ENCODE measurements at regions of chr11 and their contacts with region 1.

Region 1: DNA sequence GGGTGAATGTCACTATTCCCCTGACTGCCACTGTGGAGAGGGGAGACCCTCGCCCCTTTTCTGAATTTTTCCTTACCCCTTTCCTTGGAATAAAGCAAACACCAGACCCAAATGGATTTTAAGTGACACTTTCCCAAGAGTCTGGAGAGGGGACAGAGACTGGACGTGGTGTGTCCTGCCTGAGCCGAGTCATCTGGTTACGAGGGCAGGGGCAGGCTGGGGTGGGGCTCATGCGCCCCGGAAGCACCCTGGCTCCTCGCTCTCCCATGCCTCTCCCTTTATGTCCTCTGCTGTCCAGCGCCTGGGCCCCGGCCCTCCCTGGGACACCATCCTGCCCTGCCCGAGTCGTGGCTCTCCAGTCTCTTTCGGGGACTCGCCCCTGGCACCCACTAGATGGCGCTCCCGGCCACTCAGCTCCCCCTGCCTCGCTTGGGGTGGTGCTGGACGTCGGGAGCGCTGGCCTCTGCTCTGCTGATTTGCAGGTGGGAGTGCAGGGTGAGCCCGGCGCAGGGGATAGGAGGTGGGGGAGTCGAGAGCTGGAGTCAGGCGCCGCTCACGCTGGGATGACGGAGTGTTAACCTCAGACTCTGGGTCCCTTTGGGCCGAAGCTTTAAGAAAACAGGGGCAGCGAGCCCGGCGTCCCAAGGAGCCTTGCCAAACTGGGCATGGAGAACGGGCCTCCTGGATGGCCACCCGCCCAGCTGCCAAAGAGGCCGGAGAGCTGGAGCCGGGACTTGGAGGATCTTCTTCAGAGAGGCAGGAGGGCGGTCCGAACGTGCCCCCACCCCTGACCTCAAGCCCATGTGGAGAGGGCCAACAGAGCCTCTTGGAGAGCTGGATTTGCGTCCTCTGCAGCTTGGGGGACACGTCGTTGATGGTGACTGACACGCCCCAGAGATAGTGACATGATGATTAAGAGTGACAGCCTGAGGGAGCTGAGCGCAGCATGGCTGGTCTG is 89.9 kb downstream of the RPS6KA4 start:
- DNase-seq: peak; percentile 92
- ATAC-seq: peak; percentile 83
- H3K4me3 Mint-ChIP-seq: peak overlapping the region; percentile 76
- H3K27ac Mint-ChIP-seq: no peak overlapping the region
- H3K4me1 Mint-ChIP-seq: peaks cover 18% of the 10 kb centered on the region
- H3K27me3 Mint-ChIP-seq: peaks cover 68% of the 10 kb centered on the region
- CTCF ChIP-seq: peak; percentile 69

Region 2: GRCh38 chr11:64165849-64166635 is 282.8 kb before region 1 on chr11 and contains the start of gene MACROD1:
- CTCF ChIA-PET with region 1: no interaction called
- POLR2A ChIA-PET with region 1: no interaction called
- DNase-seq: peak; percentile 80
- ATAC-seq: peak; percentile 77
- H3K4me3 Mint-ChIP-seq: peak within 1 kb of the TSS; percentile 74
- H3K27ac Mint-ChIP-seq: peak within 1 kb of the TSS; percentile 86
- H3K4me1 Mint-ChIP-seq: peaks cover 22% of the 10 kb centered on the region
- H3K27me3 Mint-ChIP-seq: no peaks in the 10 kb centered on the region
- CTCF ChIP-seq: no peak
- total RNA-seq, gene MACROD1: 36.9 to 54.4 TPM (median 52.9 TPM) in 3 replicates

Region 3: DNA sequence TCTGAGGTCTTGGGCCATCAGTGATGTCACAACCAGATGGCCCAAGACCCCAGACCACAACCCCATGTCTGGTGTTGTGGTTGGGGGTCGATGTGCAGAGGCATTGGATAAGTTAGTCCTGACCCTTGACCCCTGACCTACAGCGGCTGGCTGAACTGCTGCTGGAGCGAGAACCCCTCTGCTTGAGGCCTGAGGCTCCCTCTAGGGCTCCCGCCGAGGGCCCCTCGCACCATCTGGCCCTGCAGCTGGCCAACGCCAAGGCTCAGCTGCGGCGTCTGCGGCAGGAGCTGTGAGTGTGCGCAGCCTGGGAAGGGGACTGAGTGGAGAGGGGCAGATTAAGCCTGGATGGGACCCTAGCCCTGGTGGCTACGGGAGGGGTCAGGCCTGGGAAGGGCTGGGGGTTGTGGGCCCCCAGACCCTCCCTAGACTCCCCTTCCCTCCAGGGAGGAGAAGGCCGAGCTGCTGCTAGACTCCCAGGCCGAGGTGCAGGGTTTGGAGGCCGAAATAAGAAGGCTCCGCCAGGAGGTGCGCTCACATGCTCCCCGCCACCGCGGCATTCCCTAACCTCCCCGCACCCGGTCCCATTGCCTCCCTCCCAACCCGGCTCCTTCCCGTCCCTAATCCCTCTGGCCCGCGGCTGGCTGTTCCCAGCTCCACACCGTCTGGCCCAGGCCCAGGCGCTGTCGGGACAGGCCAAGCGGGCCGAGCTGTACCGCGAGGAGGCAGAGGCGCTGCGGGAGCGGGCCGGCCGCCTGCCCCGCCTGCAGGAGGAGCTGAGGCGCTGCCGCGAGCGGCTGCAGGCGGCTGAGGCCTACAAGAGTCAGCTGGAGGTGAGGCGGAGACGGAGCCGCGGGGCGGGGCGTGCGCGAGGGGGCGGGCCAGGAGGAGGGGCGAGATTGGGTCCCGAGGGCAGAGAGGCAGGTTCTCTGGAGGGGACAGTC is 106.8 kb before region 1 on chr11:
- CTCF ChIA-PET with region 1: interaction called, 35 read pairs
- POLR2A ChIA-PET with region 1: no interaction called
- DNase-seq: peak; percentile 97
- ATAC-seq: peak; percentile 75
- H3K4me3 Mint-ChIP-seq: peak overlapping the region; percentile 69
- H3K27ac Mint-ChIP-seq: no peak overlapping the region
- H3K4me1 Mint-ChIP-seq: peaks cover 21% of the 10 kb centered on the region
- H3K27me3 Mint-ChIP-seq: peaks cover 30% of the 10 kb centered on the region
- CTCF ChIP-seq: no peak

Region 4: GRCh38 chr11:64396079-64396591 is 52.7 kb before region 1 on chr11:
- CTCF ChIA-PET with region 1: interaction called, 36 read pairs
- POLR2A ChIA-PET with region 1: no interaction called
- DNase-seq: peak; percentile 48
- ATAC-seq: peak; percentile 90
- H3K4me3 Mint-ChIP-seq: peak overlapping the region; percentile 38
- H3K27ac Mint-ChIP-seq: peak overlapping the region; percentile 96
- H3K4me1 Mint-ChIP-seq: peaks cover 27% of the 10 kb centered on the region
- H3K27me3 Mint-ChIP-seq: peaks cover 23% of the 10 kb centered on the region
- CTCF ChIP-seq: no peak

Region 5: DNA sequence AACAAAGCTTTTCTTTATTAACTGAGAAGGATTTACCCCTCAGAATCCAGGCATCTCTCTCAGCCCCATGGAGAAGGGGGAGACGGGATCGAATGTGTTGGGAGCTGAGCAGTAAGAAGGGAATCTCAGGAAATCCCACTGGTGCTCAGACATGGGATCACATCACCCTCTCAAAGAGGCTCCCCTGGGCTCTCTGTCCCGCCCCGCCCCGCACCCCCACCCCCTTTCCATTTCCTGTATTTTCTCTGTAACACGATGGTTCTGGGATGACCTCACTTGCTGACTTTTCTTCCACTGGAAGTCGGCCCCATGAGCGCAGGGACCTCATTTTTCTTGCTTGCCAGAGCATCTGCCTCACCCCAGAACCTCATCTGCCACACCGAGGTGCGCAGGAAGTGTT is 10.1 kb after region 1 on chr11:
- CTCF ChIA-PET with region 1: interaction called, 41 read pairs
- POLR2A ChIA-PET with region 1: interaction called, 4 read pairs
- DNase-seq: no peak
- ATAC-seq: peak; percentile 43; the same call in 1 of the 2 replicates
- H3K4me3 Mint-ChIP-seq: no peak overlapping the region
- H3K27ac Mint-ChIP-seq: no peak overlapping the region
- H3K4me1 Mint-ChIP-seq: peaks cover 16% of the 10 kb centered on the region
- H3K27me3 Mint-ChIP-seq: peaks cover 51% of the 10 kb centered on the region
- CTCF ChIP-seq: no peak

Region 6: GRCh38 chr11:64524526-64525042 is 75.7 kb after region 1 on chr11:
- CTCF ChIA-PET with region 1: interaction called, 15 read pairs
- POLR2A ChIA-PET with region 1: no interaction called
- DNase-seq: no peak
- ATAC-seq: no peak
- H3K4me3 Mint-ChIP-seq: no peak overlapping the region
- H3K27ac Mint-ChIP-seq: no peak overlapping the region
- H3K4me1 Mint-ChIP-seq: no peaks in the 10 kb centered on the region
- H3K27me3 Mint-ChIP-seq: peaks cover 74% of the 10 kb centered on the region
- CTCF ChIP-seq: no peak

Region 7: GRCh38 chr11:64629796-64630562 is 181.1 kb after region 1 on chr11:
- CTCF ChIA-PET with region 1: interaction called, 22 read pairs
- POLR2A ChIA-PET with region 1: no interaction called
- DNase-seq: peak; percentile 99
- ATAC-seq: peak; percentile 98
- H3K4me3 Mint-ChIP-seq: peak overlapping the region; percentile 43
- H3K27ac Mint-ChIP-seq: no peak overlapping the region
- H3K4me1 Mint-ChIP-seq: peaks cover 16% of the 10 kb centered on the region
- H3K27me3 Mint-ChIP-seq: peaks cover 66% of the 10 kb centered on the region
- CTCF ChIP-seq: peak; percentile 54

Measured in WTC11 (cell line).